Activated CD8-positive, alpha-beta T cell treated with anti-CD3 and anti-CD28 coated beads, Interleukin-2, amount 10 ng/mL, durations not matched to agents 7 days and 5 days (primary cell): ENCODE measurements at regions of chr3 and their contacts with region 1.

Region 1: GRCh38 chr3:37967260-37967881 is 23.2 kb upstream of the VILL start:
- DNase-seq: peak; percentile 73
- ATAC-seq: peak; percentile 89
- H3K4me3 Mint-ChIP-seq: no peak overlapping the region
- H3K27ac Mint-ChIP-seq: no peak overlapping the region
- H3K4me1 Mint-ChIP-seq: no peaks in the 10 kb centered on the region
- H3K27me3 Mint-ChIP-seq: peaks cover under 1% of the 10 kb centered on the region

Region 2: DNA sequence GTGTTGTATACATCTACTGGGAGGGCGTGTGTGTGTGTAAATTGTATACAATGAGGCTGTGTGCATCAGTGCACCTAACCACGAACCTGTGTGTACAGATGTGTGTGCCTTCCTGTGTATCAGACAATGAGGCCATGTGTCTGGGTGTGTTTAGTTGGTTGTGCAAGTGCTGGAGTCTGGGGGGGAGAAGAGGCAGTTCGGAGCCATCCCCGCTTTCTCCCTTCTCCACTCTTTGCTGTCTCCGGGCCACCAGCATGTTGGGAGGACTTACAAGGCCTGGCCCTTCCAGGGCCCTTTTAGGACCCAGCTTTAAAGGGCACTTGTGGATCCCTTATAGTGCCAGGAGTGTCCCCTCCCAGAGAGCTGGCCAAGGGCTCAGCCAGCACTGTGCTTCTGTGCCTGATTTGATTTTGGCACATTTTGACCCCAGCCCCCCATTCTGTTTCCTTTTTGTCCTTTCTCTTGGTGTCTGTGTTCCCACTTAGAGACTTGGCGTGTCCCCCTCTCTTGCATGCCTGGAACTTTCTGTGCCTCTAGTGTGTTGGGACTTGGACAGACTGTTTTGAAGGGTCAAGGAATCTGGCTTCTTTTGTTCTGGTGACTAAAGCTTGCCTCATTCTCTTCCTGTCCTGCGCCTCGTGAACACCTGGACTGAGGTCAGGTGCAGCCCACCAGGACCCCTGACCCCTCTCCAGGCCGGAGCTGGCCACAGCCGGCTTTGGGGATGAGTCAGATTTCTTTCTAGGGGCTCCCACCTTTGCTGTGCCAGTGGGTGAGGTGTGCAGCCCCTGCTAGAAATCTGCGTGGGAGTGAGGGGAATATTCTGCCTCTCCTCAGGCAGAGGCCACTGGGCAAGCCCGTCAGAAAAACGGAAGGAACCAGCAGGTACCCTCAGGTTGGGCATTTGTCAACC is 104.2 kb before region 1 on chr3:
- CTCF ChIA-PET with region 1: interaction called, 42 read pairs
- POLR2A ChIA-PET with region 1: no interaction called
- DNase-seq: no peak
- ATAC-seq: no peak
- H3K4me3 Mint-ChIP-seq: peak overlapping the region; percentile 68
- H3K27ac Mint-ChIP-seq: no peak overlapping the region
- H3K4me1 Mint-ChIP-seq: peaks cover 19% of the 10 kb centered on the region
- H3K27me3 Mint-ChIP-seq: peaks cover 52% of the 10 kb centered on the region

Region 3: DNA sequence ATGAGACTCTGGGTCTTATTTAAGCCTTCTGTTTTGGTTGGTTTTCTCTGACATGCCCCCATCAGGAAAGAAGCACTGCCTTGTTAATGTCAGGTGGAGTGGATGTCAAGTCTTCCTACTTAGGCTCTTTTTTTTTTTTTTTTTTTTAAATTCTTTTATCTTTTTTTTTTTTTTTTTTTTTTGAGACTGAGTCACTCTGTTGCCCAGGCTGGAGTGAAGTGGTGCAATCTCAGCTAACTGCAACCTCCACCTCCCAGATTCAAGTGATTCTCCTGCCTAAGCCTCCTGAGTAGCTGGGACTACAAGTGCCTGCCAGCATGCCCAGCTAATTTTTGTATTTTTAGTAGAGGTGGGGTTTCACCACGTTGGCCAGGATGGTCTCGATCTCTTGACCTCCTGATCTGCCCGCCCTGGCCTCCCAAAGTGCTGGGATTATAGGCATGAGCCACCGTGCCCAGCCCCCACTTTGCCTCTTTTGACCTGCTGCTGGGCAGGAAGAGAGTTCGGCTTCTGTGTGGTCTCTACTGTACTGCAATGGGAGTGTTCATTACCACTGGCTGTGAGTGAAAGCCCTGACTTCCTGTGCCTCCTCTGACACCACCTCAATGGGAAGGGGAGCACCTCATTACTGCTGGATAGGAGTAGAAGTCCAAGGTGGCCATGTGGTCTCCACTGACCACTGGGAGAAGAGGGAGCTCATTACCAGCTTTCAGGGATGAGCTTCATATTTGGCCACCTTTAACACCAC is 94.8 kb before region 1 on chr3:
- CTCF ChIA-PET with region 1: interaction called, 20 read pairs
- POLR2A ChIA-PET with region 1: no interaction called
- DNase-seq: no peak
- ATAC-seq: no peak
- H3K4me3 Mint-ChIP-seq: no peak overlapping the region
- H3K27ac Mint-ChIP-seq: no peak overlapping the region
- H3K4me1 Mint-ChIP-seq: peaks cover 6% of the 10 kb centered on the region
- H3K27me3 Mint-ChIP-seq: peaks cover 29% of the 10 kb centered on the region

Region 4: DNA sequence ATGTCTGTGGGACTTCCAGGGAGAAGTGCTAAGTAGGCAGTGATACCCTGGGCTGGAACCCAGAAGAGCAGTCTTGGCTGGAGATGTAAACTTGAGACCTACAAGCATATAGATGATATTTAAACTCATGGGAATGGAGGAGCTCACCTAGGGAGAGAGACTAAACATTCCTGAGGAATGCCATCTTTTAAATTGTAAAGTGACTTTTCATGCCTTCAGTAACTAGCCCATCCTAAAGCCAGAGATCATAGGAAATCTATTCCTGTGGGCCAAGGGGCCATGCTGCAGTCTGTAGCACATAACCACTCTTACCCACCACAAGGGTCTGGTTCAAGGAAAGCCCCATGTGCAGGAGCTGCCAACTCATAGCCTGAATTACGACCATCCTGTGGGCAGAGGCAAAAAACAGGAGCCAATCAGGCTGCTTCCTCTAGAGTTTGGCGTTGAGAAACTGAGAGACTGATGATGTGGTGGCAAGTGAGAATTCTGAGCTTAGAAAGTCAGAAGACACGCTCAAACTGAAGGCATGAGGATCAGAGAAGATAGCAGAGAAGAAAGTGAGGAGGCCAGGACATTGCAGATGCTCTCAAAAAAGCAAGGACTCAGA is 68.2 kb before region 1 on chr3:
- CTCF ChIA-PET with region 1: interaction called, 69 read pairs
- POLR2A ChIA-PET with region 1: no interaction called
- DNase-seq: no peak
- ATAC-seq: peak; percentile 32
- H3K4me3 Mint-ChIP-seq: no peak overlapping the region
- H3K27ac Mint-ChIP-seq: no peak overlapping the region
- H3K4me1 Mint-ChIP-seq: peaks cover 46% of the 10 kb centered on the region
- H3K27me3 Mint-ChIP-seq: peaks cover 7% of the 10 kb centered on the region

Region 5: DNA sequence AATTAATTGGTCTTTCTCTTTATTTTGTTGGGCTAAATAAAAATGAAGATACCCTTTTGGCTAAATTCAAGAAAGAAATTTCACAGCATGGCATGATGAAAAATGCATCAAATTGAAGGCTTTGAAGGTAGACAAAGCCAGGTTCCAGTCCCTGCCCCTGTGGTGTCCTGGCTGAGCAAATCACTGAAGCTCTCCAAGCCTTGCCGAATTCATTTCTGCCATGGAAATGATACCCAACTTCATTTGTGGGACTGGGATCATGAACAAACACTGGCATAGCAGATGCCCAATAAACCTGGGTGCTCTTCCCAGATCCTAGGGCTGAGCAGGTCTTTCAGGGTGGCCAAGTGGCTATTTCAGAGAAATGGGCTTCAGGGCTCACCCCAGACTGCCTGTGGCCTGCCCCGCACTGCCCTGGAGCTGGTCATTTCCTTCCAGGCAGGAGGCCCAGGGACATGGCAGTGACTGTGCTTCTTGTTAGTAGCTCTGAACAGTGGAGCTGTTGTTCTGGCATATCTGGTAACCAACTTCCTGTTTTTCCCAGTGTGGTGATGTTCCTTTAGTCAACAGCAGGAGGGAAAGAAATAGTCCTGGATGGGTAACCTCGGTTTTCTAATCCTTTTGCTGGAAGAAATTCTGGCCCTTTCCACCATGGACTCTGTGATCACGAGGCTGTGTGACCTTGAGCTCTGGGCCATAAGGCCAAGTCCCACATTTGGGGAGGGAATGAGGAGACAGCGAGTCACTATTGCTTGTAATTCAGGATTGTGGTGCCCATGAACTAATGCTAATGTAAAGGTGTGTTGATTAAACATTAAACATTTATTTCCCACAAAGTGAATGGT is 58.1 kb before region 1 on chr3:
- CTCF ChIA-PET with region 1: interaction called, 13 read pairs
- POLR2A ChIA-PET with region 1: no interaction called
- DNase-seq: no peak
- ATAC-seq: no peak
- H3K4me3 Mint-ChIP-seq: no peak overlapping the region
- H3K27ac Mint-ChIP-seq: no peak overlapping the region
- H3K4me1 Mint-ChIP-seq: peaks cover 41% of the 10 kb centered on the region
- H3K27me3 Mint-ChIP-seq: peaks cover 29% of the 10 kb centered on the region

Region 6: GRCh38 chr3:37956723-37957528 is 10.4 kb before region 1 on chr3:
- CTCF ChIA-PET with region 1: interaction called, 39 read pairs
- POLR2A ChIA-PET with region 1: interaction called, 3 read pairs
- DNase-seq: no peak
- ATAC-seq: peak; percentile 5
- H3K4me3 Mint-ChIP-seq: no peak overlapping the region
- H3K27ac Mint-ChIP-seq: peak overlapping the region; percentile 90
- H3K4me1 Mint-ChIP-seq: peaks cover 22% of the 10 kb centered on the region
- H3K27me3 Mint-ChIP-seq: no peaks in the 10 kb centered on the region